Heart left ventricle (tissue), 16 donors: ENCODE measurements at regions of chr3 and their contacts with region 1.

Region 1: DNA sequence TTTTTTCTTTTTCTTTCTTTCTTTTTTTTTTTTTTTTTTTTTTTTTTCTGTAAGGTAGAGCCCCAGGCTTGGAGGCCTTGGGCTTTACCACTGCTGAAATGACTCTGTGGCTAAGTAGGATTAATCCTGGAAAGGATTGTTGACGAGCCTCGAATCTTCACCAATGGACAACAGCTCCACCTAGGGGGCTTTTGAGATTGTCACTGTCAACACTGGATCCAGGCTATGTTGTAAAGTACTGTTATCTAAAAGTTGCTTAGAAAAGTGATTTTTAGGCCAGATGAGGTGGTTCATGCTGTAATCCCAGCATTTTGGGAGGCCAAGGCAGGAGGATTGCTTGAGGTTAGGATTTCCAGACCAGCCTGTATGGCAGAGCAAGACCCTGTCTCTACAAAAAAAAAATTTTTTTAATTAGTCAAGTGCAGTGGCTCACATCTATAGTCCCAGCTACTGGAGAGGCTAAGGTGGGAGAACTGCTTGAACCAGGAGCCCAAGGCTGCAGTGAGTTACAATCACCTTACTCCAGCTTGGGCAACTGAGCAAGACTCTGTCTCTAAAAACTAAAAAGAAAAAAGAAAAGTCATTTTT is 41.6 kb downstream of the KLHL18 start:
- DNase-seq: peak in 4 of 5 donors; percentile 37 to 63 (median 50)
- ATAC-seq: peak; percentile 49 to 94 (median 88)
- H3K4me3 ChIP-seq: no peak overlapping the region
- H3K27ac ChIP-seq: no peak overlapping the region
- H3K4me1 ChIP-seq: peaks cover 0 to 8% (median 0%) of the 10 kb centered on the region in 12 donors
- H3K27me3 ChIP-seq: no peaks in the 10 kb centered on the region
- CTCF ChIP-seq: peak; percentile 60 to 80 (median 68)
- POLR2A ChIP-seq: no peak

Region 2: DNA sequence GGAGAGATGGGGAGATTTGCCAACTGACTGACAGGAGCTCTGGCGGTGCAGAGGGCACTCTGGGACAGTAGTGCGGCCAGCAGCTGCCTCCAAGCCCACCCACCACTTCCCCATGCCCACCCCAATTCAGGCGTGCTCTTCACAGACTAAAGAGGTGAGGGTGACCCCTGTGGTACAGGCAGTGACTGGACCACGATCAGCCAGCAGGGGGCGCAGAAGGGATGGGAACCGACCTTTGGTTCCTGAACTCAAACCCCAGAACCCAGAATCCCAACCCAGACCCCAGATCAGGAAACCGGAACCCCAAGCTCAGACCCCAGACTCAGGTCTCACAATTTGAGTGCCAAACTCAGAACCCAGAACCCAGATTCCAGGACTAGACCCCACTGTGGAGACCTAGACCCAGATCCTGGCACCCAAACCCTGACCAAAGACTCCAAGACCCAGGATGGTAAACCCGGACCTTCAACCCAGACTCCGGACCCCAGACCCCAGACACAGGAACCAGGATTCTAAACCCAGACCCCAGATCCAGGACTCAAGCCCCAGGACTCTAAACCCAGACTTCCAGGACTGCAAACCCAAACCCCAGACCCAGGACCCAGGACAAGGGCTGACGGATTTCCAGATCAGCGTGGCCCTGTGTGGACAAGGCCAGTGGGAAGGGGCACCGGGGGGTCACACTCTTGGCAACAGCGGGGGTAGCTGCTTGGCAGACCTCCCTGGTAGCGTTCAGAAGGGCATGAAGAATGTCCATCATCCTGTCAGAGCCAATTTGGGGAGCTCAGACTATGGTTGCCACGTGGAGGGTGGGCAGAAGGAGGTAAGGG is 457.4 kb before region 1 on chr3:
- intact Hi-C with region 1: loop called in 1 of 10 experiments (anchors 10 kb)
- DNase-seq: peak; percentile 80 to 93 (median 86)
- ATAC-seq: peak in 3 of 4 donors; percentile 8 to 32 (median 18)
- H3K4me3 ChIP-seq: no peak overlapping the region
- H3K27ac ChIP-seq: peak overlapping the region; percentile 63 to 100 (median 86)
- H3K4me1 ChIP-seq: peaks cover 13 to 78% (median 38%) of the 10 kb centered on the region in 12 donors
- H3K27me3 ChIP-seq: no peaks in the 10 kb centered on the region
- CTCF ChIP-seq: peak; percentile 83 to 93 (median 88)
- POLR2A ChIP-seq: no peak

Region 3: DNA sequence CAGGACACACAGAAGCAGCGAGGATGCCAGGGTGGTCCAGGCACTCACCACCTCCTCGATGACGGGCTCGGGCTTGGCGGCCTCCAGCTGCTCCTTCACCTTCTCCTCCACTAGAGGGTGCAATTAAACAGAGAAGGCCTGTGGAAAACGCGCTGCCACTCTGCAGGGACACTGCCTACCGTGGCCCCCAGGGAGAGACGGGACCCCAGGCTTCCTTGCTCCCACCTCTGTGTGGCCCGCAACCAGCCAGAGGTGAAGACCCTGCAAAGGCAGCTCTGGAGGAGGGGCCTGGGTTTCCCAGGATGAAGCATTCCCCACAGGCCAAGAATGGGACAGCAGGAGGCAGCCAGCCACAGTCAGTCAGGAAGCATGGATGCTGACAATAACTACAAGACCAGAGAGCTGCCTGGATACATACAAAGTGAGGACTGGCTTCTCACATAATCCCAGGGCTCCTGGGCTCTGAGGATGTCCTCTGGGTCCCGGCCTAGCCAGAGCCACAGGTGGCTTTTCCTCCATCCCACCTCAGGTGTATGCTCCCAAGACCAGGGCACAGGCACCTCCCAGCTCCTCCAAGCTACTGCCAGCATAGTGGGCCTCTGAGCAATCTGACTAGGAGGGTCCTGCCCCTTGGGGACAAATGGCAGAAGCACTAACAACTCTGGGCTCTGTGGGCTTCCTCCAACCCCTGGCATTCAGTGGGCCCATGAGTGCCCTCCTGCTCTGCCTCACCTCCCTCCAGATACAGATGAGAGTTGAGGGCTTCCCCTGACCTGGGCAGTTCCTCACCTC is 400.6 kb before region 1 on chr3:
- intact Hi-C with region 1: loop called in 2 of 10 experiments (anchors 10 kb)
- DNase-seq: peak in 2 of 5 donors; percentile 33 to 58
- ATAC-seq: peak; percentile 34 to 38 (median 36)
- H3K4me3 ChIP-seq: no peak overlapping the region
- H3K27ac ChIP-seq: peak overlapping the region in 1 of 12 donors; percentile 3
- H3K4me1 ChIP-seq: peaks cover 9 to 57% (median 49%) of the 10 kb centered on the region in 12 donors
- H3K27me3 ChIP-seq: no peaks in the 10 kb centered on the region
- CTCF ChIP-seq: peak; percentile 52 to 77 (median 64)
- POLR2A ChIP-seq: no peak

Region 4: GRCh38 chr3:47009225-47010110 is 314.9 kb before region 1 on chr3:
- intact Hi-C with region 1: loop called in 1 of 10 experiments (anchors 10 kb)
- DNase-seq: peak; percentile 92 to 94 (median 94)
- ATAC-seq: peak; percentile 94 to 97 (median 96)
- H3K4me3 ChIP-seq: peak overlapping the region; percentile 44 to 82 (median 63)
- H3K27ac ChIP-seq: peak overlapping the region; percentile 73 to 92 (median 86)
- H3K4me1 ChIP-seq: peaks cover 0 to 22% (median 7%) of the 10 kb centered on the region in 12 donors
- H3K27me3 ChIP-seq: no peaks in the 10 kb centered on the region
- CTCF ChIP-seq: no peak
- POLR2A ChIP-seq: peak; percentile 79 to 92

Region 5: GRCh38 chr3:47082519-47082918 is 241.9 kb before region 1 on chr3:
- intact Hi-C with region 1: loop called in 2 of 10 experiments (anchors 10 kb)
- DNase-seq: no peak
- ATAC-seq: no peak
- H3K4me3 ChIP-seq: no peak overlapping the region
- H3K27ac ChIP-seq: peak overlapping the region in 1 of 12 donors; percentile 12
- H3K4me1 ChIP-seq: peaks cover 0 to 23% (median 0%) of the 10 kb centered on the region in 12 donors
- H3K27me3 ChIP-seq: no peaks in the 10 kb centered on the region
- CTCF ChIP-seq: no peak
- POLR2A ChIP-seq: no peak

Region 6: GRCh38 chr3:47250309-47251060 is 73.9 kb before region 1 on chr3:
- intact Hi-C with region 1: loop called in 9 of 10 experiments (anchors 1 to 5 kb)
- DNase-seq: peak in 4 of 5 donors; percentile 54 to 65 (median 62)
- ATAC-seq: peak in 3 of 4 donors; percentile 81 to 86 (median 84)
- H3K4me3 ChIP-seq: no peak overlapping the region
- H3K27ac ChIP-seq: no peak overlapping the region
- H3K4me1 ChIP-seq: peaks cover 0 to 4% (median 0%) of the 10 kb centered on the region in 12 donors
- H3K27me3 ChIP-seq: no peaks in the 10 kb centered on the region
- CTCF ChIP-seq: peak; percentile 43 to 70 (median 58)
- POLR2A ChIP-seq: no peak

Region 7: DNA sequence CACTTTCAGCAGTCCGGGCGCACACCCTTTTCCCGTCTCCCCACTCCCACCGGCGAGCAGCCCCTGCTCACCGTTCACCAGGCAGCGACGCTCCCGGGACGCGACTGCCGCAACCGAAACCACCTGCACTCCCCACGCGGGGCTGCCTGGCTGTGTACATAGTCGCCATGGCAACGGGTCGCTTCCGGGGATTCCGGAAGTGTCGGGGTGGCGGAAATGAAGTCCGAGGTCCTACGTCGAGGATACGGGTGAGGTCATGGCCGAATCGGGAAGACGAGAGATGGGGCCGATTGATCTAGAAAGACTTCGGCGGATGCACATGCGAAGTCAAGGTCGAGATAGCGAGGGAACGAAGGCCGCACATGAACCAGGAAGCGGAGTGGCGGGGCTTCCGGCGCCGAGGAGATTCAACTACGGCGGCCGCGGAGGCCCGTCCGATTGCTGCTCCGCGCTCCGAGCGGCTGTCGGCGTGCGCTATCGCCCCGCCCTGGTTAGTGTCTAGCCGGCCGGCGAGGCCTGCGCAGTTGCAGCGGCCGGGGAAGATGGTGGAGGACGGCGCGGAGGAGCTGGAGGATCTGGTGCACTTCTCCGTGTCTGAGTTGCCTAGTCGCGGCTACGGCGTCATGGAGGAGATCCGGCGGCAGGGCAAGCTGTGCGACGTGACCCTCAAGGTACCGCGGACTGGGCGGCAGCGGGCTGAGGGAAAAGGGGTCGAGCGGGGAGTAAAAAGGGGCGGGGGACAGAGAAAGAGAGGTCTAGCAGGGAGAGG is 41.8 kb before region 1 on chr3 and contains the starts of genes KIF9 and KLHL18:
- intact Hi-C with region 1: loop called in 5 of 10 experiments (anchors 5 kb)
- DNase-seq: peak; percentile 94 to 97 (median 95)
- ATAC-seq: peak; percentile 91 to 98 (median 97)
- H3K4me3 ChIP-seq: peak within 1 kb of the TSS; percentile 66 to 90 (median 84)
- H3K27ac ChIP-seq: peak within 1 kb of the TSS; percentile 66 to 98 (median 94)
- H3K4me1 ChIP-seq: peaks cover 7 to 48% (median 30%) of the 10 kb centered on the region in 12 donors
- H3K27me3 ChIP-seq: no peaks in the 10 kb centered on the region
- CTCF ChIP-seq: peak in 1 of 12 donors; percentile 31
- POLR2A ChIP-seq: peak in 1 of 2 donors; percentile 42
- total RNA-seq, gene KIF9: 5.2 to 13.0 (median 8.6) TPM
- total RNA-seq, gene KLHL18: 15.2 to 51.0 (median 43.5) TPM